Transverse colon (tissue), 4 donors: ENCODE measurements at regions of chr5 and their contacts with region 1.

Region 1: GRCh38 chr5:128532127-128532526 is 5.9 kb downstream of the FBN2 start:
- DNase-seq: no peak
- H3K4me3 ChIP-seq: no peak overlapping the region
- H3K27ac ChIP-seq: no peak overlapping the region
- H3K4me1 ChIP-seq: peaks cover 0 to 4% (median 4%) of the 10 kb centered on the region in 4 donors
- H3K27me3 ChIP-seq: peaks cover 31% of the 10 kb centered on the region
- CTCF ChIP-seq: no peak
- EP300 ChIP-seq: no peak
- POLR2A ChIP-seq: no peak

Region 2: DNA sequence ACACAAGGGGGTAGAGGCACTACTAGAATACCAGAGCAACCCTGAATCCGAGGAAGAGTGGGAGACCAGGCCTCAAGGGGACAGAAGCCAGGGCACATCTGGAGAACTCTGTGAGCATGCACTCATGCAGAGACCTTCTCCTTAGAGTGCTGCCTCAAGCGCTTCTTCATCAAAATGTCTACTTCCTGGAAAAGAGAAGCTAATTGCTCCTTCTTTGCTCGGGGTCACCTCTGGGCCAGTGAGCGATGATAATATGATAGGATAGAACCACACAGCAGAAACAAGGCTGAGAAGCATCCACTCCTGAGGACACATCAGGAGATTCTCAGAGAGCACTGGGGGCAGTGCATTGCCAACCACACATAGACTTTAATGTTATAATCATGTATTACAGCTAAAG is 1778.9 kb before region 1 on chr5:
- in situ Hi-C with region 1: no loop called
- intact Hi-C with region 1: no loop called
- DNase-seq: no peak
- H3K4me3 ChIP-seq: no peak overlapping the region
- H3K27ac ChIP-seq: no peak overlapping the region
- H3K4me1 ChIP-seq: no peaks in the 10 kb centered on the region
- H3K27me3 ChIP-seq: no peaks in the 10 kb centered on the region
- CTCF ChIP-seq: no peak
- EP300 ChIP-seq: no peak
- POLR2A ChIP-seq: no peak

Region 3: DNA sequence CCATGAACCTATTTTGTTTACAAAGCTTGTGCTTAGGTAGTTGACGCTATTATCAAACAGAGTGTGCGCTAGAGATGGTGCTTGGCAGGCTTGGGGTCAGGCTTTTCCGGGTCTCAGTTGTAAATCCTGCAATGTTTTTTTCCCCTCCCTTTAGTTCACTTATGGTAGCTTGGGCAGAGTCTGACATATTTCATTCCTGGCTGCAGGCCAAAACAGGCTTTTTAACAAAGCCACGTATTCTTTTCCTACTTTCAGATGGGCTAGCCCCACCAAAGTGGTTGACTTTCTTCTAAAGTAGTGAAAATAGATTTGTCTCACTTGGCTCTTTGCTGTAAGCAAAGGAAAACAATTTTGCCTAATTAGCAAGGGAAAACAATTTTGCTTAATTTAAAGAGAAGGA is 63.9 kb after region 1 on chr5:
- in situ Hi-C with region 1: no loop called
- intact Hi-C with region 1: loop called (anchors 2 kb)
- DNase-seq: no peak
- H3K4me3 ChIP-seq: no peak overlapping the region
- H3K27ac ChIP-seq: no peak overlapping the region
- H3K4me1 ChIP-seq: no peaks in the 10 kb centered on the region
- H3K27me3 ChIP-seq: no peaks in the 10 kb centered on the region
- CTCF ChIP-seq: no peak
- EP300 ChIP-seq: no peak
- POLR2A ChIP-seq: no peak

Region 4: DNA sequence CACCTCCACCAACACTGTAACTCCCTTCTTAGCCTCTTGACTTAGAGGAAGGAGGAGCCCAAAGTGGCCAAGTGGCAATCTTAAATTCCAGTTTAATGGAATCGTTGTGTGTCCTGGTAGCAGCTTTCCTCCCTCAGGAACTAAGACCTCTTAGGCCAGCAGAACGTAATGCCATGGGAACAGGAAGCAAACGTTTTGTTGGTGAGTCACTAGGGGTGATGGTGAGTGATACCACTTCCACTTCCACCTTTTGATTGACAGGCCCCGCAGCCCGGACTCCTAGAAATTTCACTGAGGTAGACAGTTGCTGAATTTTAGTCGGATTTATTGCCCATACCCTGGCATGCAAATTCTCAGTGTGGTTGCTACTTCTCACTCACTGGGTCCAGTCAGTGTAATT is 100.1 kb after region 1 on chr5:
- in situ Hi-C with region 1: no loop called
- intact Hi-C with region 1: no loop called
- DNase-seq: no peak
- H3K4me3 ChIP-seq: no peak overlapping the region
- H3K27ac ChIP-seq: no peak overlapping the region
- H3K4me1 ChIP-seq: no peaks in the 10 kb centered on the region
- H3K27me3 ChIP-seq: no peaks in the 10 kb centered on the region
- CTCF ChIP-seq: no peak
- EP300 ChIP-seq: no peak
- POLR2A ChIP-seq: no peak